Esophagus squamous epithelium (tissue), 5 donors: ENCODE measurements at regions of chr10 and their contacts with region 1.

Region 1: GRCh38 chr10:77494327-77494726 is 143.3 kb downstream of the KCNMA1 start:
- DNase-seq: no peak
- H3K4me3 ChIP-seq: no peak overlapping the region
- H3K27ac ChIP-seq: no peak overlapping the region
- H3K4me1 ChIP-seq: peaks cover 0 to 49% (median 16%) of the 10 kb centered on the region in 3 donors
- H3K27me3 ChIP-seq: peaks cover 0 to 7% (median 0%) of the 10 kb centered on the region in 4 donors
- CTCF ChIP-seq: peak in 2 of 6 experiments; percentile 7 to 18
- POLR2A ChIP-seq: no peak

Region 2: DNA sequence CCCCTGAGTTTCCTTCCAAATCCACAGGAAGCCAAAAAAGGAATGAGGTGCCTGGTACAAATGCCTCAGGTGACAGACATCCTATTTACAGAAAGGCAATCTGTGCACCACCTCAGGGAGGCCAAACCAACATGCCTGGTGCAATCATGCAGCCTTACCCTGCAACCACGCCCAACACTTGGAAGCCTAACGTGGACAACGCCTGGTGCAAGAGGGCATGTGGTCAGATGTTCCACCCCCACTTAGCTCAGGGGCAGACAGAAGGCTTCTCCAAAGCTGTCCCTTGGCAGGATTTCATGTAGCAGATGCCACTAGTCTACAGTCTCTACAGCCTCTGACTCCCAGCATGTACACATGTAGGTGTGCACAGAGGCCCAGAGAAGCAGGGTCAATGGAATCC is 53.8 kb after region 1 on chr10:
- intact Hi-C with region 1: no loop called
- DNase-seq: no peak
- H3K4me3 ChIP-seq: no peak overlapping the region
- H3K27ac ChIP-seq: no peak overlapping the region
- H3K4me1 ChIP-seq: peaks cover 0 to 28% (median 5%) of the 10 kb centered on the region in 3 donors
- H3K27me3 ChIP-seq: no peaks in the 10 kb centered on the region
- CTCF ChIP-seq: no peak
- POLR2A ChIP-seq: no peak

Region 3: GRCh38 chr10:77574438-77574837 is 80.1 kb after region 1 on chr10:
- intact Hi-C with region 1: no loop called
- DNase-seq: no peak
- H3K4me3 ChIP-seq: no peak overlapping the region
- H3K27ac ChIP-seq: peak overlapping the region in 3 of 4 donors; percentile 3 to 60 (median 35)
- H3K4me1 ChIP-seq: peaks cover 0 to 33% (median 4%) of the 10 kb centered on the region in 3 donors
- H3K27me3 ChIP-seq: no peaks in the 10 kb centered on the region
- CTCF ChIP-seq: no peak
- POLR2A ChIP-seq: no peak

Region 4: DNA sequence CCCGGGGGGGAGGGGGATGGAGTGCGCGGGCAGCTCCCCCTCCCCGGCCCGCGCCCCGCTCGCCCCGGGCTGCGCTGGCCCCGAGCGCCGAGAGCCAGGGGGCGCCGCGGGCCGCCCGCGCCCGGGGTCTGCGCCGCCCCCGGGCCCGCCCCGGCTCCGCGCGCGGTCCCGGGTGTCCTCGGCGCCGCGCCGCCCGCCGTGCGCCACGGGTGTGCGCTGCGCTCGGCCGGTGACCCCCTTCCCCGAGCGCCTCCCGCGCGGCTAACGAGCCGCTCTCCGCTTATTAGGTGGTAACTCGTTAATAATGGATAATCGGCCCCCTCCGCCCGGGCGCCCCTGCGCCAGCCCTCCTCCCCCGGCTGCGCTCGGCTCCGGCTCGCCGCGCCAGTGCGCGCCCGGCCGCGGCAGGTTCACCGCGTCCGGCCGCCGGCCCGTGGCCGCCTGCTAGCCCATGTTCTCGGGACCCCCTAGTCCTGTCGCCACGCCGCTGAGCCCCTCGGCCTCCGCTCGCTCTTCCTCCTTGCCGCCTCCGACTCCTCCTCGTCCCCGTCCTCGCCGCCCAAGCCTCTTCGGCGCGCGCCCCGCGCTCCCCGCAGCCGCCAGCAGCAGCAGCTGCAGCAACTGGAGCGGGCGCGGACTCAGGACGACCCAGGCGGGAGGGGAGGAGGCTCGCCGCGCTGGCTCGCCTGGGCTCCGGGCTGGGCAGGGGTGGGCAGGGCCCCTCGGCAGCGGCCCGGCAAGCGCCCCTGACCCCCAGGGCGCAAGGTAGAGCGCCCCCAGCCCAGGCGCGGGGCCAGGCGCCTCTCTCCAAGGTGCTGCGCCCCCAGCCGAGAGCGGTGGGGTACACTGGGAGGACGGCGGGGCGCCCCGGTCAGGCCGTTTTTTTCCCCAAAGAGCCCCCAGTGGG is 143.8 kb after region 1 on chr10:
- intact Hi-C with region 1: loop called (anchors 10 kb)
- DNase-seq: no peak
- H3K4me3 ChIP-seq: peak overlapping the region; percentile 50 to 71 (median 63)
- H3K27ac ChIP-seq: peak overlapping the region; percentile 63 to 86 (median 76)
- H3K4me1 ChIP-seq: peaks cover 5 to 63% (median 6%) of the 10 kb centered on the region in 3 donors
- H3K27me3 ChIP-seq: peaks cover 0 to 79% (median 2%) of the 10 kb centered on the region in 4 donors
- CTCF ChIP-seq: peak in 1 of 6 experiments; percentile 5
- POLR2A ChIP-seq: no peak

Region 5: GRCh38 chr10:77685432-77685831 is 191.1 kb after region 1 on chr10:
- intact Hi-C with region 1: no loop called
- DNase-seq: no peak
- H3K4me3 ChIP-seq: no peak overlapping the region
- H3K27ac ChIP-seq: no peak overlapping the region
- H3K4me1 ChIP-seq: no peaks in the 10 kb centered on the region
- H3K27me3 ChIP-seq: peaks cover 0 to 41% (median 0%) of the 10 kb centered on the region in 4 donors
- CTCF ChIP-seq: no peak
- POLR2A ChIP-seq: no peak